ENCODE measurements at regions of chr17 and their contacts with region 1.

Region 1: GRCh38 chr17:75589012-75589918 is 1.7 kb downstream of the MYO15B start:
- DNase-seq: peak; percentile 95
- H3K4me3 ChIP-seq: peak overlapping the region; percentile 52 to 69 (median 67)
- H3K27ac ChIP-seq: peak overlapping the region; percentile 80 to 94 (median 88)
- H3K4me1 ChIP-seq: peaks cover 3 to 22% (median 12%) of the 10 kb centered on the region in 4 donors
- H3K27me3 ChIP-seq: peaks cover 0 to 5% (median 0%) of the 10 kb centered on the region in 3 donors
- CTCF ChIP-seq: peak; percentile 5 to 74 (median 30)
- EP300 ChIP-seq: no peak
- POLR2A ChIP-seq: no peak

Region 2: GRCh38 chr17:75289115-75289831 is 300.0 kb before region 1 on chr17 and contains the start of gene SLC25A19:
- intact Hi-C with region 1: loop called (anchors 10 kb)
- DNase-seq: peak; percentile 100
- H3K4me3 ChIP-seq: peak within 1 kb of the TSS; percentile 65 to 78 (median 74)
- H3K27ac ChIP-seq: peak within 1 kb of the TSS; percentile 90 to 97 (median 94)
- H3K4me1 ChIP-seq: peaks cover 0 to 15% (median 5%) of the 10 kb centered on the region in 4 donors
- H3K27me3 ChIP-seq: no peaks in the 10 kb centered on the region
- CTCF ChIP-seq: no peak
- EP300 ChIP-seq: no peak
- POLR2A ChIP-seq: peak; percentile 63 to 78
- total RNA-seq, gene SLC25A19: 8.7 to 19.6 (median 14.7) TPM

Region 3: GRCh38 chr17:75405365-75406221 is 183.7 kb before region 1 on chr17 and contains the start of gene GRB2:
- intact Hi-C with region 1: loop called (anchors 5 kb)
- DNase-seq: peak; percentile 99
- H3K4me3 ChIP-seq: peak within 1 kb of the TSS; percentile 92 to 100 (median 96)
- H3K27ac ChIP-seq: peak within 1 kb of the TSS; percentile 92 to 97 (median 97)
- H3K4me1 ChIP-seq: peaks cover 0 to 38% (median 22%) of the 10 kb centered on the region in 4 donors
- H3K27me3 ChIP-seq: no peaks in the 10 kb centered on the region
- CTCF ChIP-seq: no peak
- EP300 ChIP-seq: peak in 1 of 4 donors; percentile 57
- POLR2A ChIP-seq: peak; percentile 75 to 78
- total RNA-seq, gene GRB2: 75.3 to 103 (median 84.4) TPM

Region 4: GRCh38 chr17:75430159-75430974 is 158.9 kb before region 1 on chr17:
- intact Hi-C with region 1: loop called (anchors 1 kb)
- DNase-seq: no peak
- H3K4me3 ChIP-seq: no peak overlapping the region
- H3K27ac ChIP-seq: peak overlapping the region; percentile 72 to 82 (median 80)
- H3K4me1 ChIP-seq: peaks cover 0 to 39% (median 26%) of the 10 kb centered on the region in 4 donors
- H3K27me3 ChIP-seq: no peaks in the 10 kb centered on the region
- CTCF ChIP-seq: no peak
- EP300 ChIP-seq: no peak
- POLR2A ChIP-seq: no peak

Region 5: GRCh38 chr17:75524953-75525719 is 64.1 kb before region 1 on chr17 and contains the start of gene LLGL2:
- intact Hi-C with region 1: loop called (anchors 2 kb)
- DNase-seq: peak; percentile 81
- H3K4me3 ChIP-seq: peak within 1 kb of the TSS; percentile 37 to 71 (median 60)
- H3K27ac ChIP-seq: peak within 1 kb of the TSS; percentile 52 to 70 (median 64)
- H3K4me1 ChIP-seq: peaks cover 0 to 22% (median 18%) of the 10 kb centered on the region in 4 donors
- H3K27me3 ChIP-seq: peaks cover 0 to 10% (median 0%) of the 10 kb centered on the region in 3 donors
- CTCF ChIP-seq: peak in 3 of 4 experiments; percentile 9 to 39 (median 23)
- EP300 ChIP-seq: no peak
- POLR2A ChIP-seq: peak in 1 of 2 donors; percentile 57
- total RNA-seq, gene LLGL2: 1.4 to 5.0 (median 3.4) TPM